Activated CD8-positive, alpha-beta T cell treated with anti-CD3 and anti-CD28 coated beads for 36 hours (primary cell): ENCODE measurements at regions of chr17 and their contacts with region 1.

Region 1: DNA sequence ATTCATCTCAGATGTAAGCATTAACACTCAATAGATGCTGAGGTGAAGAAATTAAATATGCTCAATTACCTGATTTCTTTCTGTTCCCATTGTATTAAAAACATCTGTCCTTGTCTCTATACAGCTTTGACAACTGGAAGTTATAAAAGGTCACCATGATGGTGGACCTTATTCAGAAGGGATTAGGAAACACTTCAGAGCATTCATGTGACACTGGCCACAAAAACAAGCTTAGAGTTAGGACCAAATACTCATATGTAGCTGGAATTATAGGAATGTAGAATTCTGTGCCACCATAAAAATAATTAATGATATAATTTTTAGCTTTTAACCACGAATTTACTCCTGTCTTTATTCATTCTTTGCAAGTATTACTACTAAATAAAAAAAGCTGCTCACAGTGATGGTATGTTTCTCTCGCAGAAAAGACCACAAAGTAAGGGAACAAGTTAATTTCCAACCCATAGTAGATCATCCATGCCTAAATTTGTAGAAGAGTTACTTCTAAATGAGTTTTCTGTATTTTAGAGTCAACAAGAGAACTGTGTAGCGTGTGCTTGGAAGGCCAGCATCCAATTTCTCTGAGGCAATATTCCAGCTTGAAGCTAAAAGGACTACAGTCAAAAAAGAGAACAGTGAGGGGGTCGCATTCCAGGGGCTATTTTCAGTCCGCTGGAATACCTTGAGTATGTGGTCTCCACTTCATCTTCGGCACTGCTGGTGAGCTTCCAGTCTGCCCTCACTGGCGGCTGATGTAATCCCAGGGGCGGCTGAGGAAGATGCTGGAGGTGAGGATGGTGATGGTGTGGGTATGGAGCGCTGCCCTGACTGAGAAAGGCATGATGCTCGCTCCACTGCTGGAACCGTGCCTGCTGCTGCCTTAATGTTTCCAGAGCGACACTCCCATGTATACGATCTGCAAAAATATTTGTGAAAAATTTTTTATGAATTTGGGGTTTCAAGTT is 63.7 kb downstream of the CACNG1 start:
- DNase-seq: no peak
- ATAC-seq: no peak
- H3K4me3 Mint-ChIP-seq: no peak overlapping the region
- H3K27ac Mint-ChIP-seq: no peak overlapping the region
- H3K4me1 Mint-ChIP-seq: peaks cover 14% of the 10 kb centered on the region
- H3K27me3 Mint-ChIP-seq: no peaks in the 10 kb centered on the region
- CTCF ChIP-seq: no peak

Region 2: DNA sequence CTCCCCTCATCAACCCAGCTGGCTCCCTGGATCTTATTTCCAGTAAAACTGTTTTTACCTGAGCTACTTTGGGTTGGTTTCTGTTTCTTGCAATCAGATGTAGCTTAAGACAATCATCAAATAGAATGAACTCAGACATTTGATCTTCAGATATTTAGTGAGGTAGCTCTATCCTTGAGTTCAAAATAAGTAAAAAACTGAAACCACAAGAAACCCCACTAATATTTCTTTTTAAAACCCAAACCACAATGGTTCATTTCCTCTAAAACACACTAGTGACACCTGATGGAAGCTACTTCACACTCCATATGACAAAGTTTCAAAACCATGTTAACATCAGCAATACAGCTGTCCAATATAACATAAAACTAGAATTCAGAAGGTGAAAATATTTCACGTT is 26.0 kb before region 1 on chr17:
- CTCF ChIA-PET with region 1: interaction called, 11 read pairs
- POLR2A ChIA-PET with region 1: no interaction called
- intact Hi-C with region 1: no loop called
- DNase-seq: no peak
- ATAC-seq: peak; percentile 74
- H3K4me3 Mint-ChIP-seq: no peak overlapping the region
- H3K27ac Mint-ChIP-seq: peak overlapping the region; percentile 72
- H3K4me1 Mint-ChIP-seq: peaks cover 17% of the 10 kb centered on the region
- H3K27me3 Mint-ChIP-seq: no peaks in the 10 kb centered on the region
- CTCF ChIP-seq: no peak